ENCODE measurements at regions of chr11 and their contacts with region 1.

Region 1: DNA sequence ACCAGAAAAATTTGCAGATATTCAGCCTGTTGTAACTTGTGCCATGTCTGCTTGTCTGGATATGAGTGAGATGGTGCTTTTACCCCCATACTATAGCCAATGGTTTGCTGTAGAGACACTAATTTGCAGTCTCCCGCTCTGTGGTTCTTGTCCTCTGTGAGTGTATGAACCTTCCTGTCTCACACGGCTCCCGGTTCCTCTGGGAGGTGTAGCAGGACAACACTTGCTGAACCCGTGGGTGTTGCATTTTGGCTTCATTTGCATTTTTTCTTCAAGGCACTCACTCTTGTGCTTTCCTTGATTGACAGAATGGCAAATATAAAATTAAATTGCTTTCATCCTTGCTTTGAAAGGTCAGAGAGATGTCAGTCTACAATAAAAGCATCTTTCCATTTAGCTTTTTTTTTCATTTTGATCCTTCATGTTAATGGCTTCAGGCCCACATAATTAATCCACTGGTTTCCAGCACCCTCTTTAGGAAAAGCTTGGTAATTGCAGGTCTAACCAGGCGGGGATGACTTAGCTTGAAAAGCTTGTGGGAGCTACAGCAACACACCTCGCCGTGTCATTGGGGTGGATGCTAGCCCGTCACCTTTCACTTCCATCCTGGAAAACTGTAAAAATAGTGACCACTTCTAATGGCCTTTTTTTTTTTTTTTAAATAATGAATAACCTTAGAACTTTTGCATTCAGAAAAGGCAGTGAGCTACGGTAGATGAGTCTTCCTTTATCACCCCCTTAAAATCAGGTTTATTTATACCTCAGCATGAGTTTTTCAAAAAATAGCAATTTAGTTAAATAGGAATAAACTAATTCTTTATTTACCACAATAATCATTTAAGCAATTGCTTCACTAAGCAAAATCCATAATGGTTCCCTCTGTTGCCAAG is 27.4 kb upstream of the ST14 start:
- DNase-seq: peak; percentile 78
- H3K4me3 ChIP-seq: no peak overlapping the region
- H3K27ac ChIP-seq: no peak overlapping the region
- H3K4me1 ChIP-seq: no peaks in the 10 kb centered on the region
- H3K27me3 ChIP-seq: no peaks in the 10 kb centered on the region

Region 2: DNA sequence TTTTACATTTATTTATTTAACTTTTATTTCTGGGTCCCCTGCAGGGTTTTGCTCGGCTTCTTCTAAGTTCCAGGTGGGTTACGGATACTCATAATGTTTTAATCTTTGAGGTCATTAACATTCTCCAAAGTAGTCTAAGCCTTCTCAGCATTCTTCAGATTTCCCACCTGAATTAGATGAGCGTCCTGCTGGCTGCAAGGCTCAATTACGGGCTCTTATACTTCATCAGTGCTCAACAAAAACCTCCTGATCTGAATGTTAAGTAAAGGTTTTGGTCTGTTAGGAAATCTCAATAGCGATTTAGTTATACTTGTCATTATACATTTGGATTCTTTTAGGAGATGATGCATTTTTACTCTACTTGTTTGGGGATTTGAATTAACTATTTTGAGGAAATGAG is 209.5 kb before region 1 on chr11:
- in situ Hi-C with region 1: loop called (anchors 5 kb)
- DNase-seq: no peak
- H3K4me3 ChIP-seq: no peak overlapping the region
- H3K27ac ChIP-seq: no peak overlapping the region
- H3K4me1 ChIP-seq: no peaks in the 10 kb centered on the region
- H3K27me3 ChIP-seq: no peaks in the 10 kb centered on the region

Region 3: DNA sequence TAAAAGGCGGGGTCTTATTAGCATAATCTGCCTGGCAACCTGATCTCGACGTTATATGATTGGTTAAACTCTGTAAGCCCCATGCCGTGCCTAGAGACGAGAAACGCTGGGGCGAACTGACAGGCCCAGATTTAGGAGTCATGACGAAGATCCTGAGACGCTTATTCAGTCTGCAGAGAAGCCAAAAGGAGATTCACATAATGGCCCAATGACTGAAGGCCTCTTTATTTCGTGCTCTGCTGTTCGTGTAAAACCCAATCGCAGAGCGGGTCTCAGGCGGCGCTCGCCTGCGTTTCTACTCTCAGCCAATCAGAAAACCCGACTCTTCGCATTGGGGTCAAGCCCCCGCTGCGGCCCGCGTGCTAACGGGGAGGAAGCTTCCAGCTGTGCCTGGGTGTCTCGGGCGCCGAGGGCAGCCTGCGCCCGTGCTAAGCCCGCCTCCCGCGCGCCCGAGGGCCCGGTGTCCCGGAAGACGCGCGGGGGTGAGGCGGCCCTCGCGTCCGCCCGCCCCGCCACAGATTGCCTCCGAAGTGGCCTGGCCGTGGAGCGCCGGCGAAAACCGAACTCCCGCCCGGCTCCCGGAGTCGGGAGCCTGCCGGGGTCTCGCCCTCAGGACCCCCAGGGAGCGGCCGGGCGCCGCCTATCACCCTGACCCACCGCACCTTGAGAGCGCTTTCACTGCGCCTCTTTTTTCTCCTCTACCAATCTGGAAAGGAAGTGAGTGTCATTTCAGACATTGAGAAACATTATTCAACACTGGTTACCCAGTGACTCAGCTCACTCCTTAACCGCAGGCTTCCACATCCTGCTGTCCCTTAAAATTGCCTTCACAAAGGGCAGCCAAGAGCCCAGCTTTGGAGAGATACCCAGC is 129.1 kb before region 1 on chr11:
- in situ Hi-C with region 1: no loop called
- DNase-seq: peak; percentile 99
- H3K4me3 ChIP-seq: peak overlapping the region; percentile 79
- H3K27ac ChIP-seq: peak overlapping the region; percentile 99
- H3K4me1 ChIP-seq: peaks cover 13% of the 10 kb centered on the region
- H3K27me3 ChIP-seq: no peaks in the 10 kb centered on the region

Region 4: GRCh38 chr11:130782361-130783221 is 650.4 kb after region 1 on chr11:
- in situ Hi-C with region 1: no loop called
- DNase-seq: peak; percentile 79
- H3K4me3 ChIP-seq: peak overlapping the region; percentile 54
- H3K27ac ChIP-seq: peak overlapping the region; percentile 82
- H3K4me1 ChIP-seq: peaks cover 39% of the 10 kb centered on the region
- H3K27me3 ChIP-seq: no peaks in the 10 kb centered on the region